ENCODE measurements at regions of chr6 and their contacts with region 1.

Region 1: GRCh38 chr6:10747251-10747972 is at the start of gene TMEM14B:
- DNase-seq: peak; percentile 87
- H3K4me3 ChIP-seq: peak within 1 kb of the TSS; percentile 72
- H3K27ac ChIP-seq: peak within 1 kb of the TSS; percentile 22
- H3K27me3 ChIP-seq: no peaks in the 10 kb centered on the region
- CTCF ChIP-seq: no peak
- polyA plus RNA-seq, gene TMEM14B: 104 and 148 TPM in 2 replicates

Region 2: GRCh38 chr6:10722820-10723566 is 24.4 kb before region 1 on chr6 and contains the start of gene TMEM14C:
- CTCF ChIA-PET with region 1: no interaction called
- POLR2A ChIA-PET with region 1: interaction called, 11 read pairs
- DNase-seq: peak; percentile 97
- H3K4me3 ChIP-seq: peak within 1 kb of the TSS; percentile 77
- H3K27ac ChIP-seq: peak within 1 kb of the TSS; percentile 77
- H3K27me3 ChIP-seq: no peaks in the 10 kb centered on the region
- CTCF ChIP-seq: no peak
- polyA plus RNA-seq, gene TMEM14C: 284 and 385 TPM in 2 replicates

Region 3: GRCh38 chr6:10759312-10759839 is 12.0 kb after region 1 on chr6:
- CTCF ChIA-PET with region 1: interaction called, 15 read pairs
- POLR2A ChIA-PET with region 1: no interaction called
- DNase-seq: peak; percentile 86
- H3K4me3 ChIP-seq: no peak overlapping the region
- H3K27ac ChIP-seq: peak overlapping the region; percentile 67
- H3K27me3 ChIP-seq: no peaks in the 10 kb centered on the region
- CTCF ChIP-seq: peak; percentile 73

Region 4: GRCh38 chr6:11194356-11195218 is 447.2 kb after region 1 on chr6:
- CTCF ChIA-PET with region 1: no interaction called
- POLR2A ChIA-PET with region 1: no interaction called
- DNase-seq: no peak
- H3K4me3 ChIP-seq: no peak overlapping the region
- H3K27ac ChIP-seq: no peak overlapping the region
- H3K27me3 ChIP-seq: no peaks in the 10 kb centered on the region
- CTCF ChIP-seq: no peak

Measured in AG04450 (cell line).